ENCODE measurements at regions of chr1 and their contacts with region 1.

Region 1: GRCh38 chr1:46442317-46443161 is 47.1 kb upstream of the DMBX1 start:
- DNase-seq: peak; percentile 94
- H3K4me3 Mint-ChIP-seq: peak overlapping the region; percentile 77
- H3K27ac Mint-ChIP-seq: no peak overlapping the region
- H3K4me1 Mint-ChIP-seq: peaks cover 13% of the 10 kb centered on the region
- H3K27me3 Mint-ChIP-seq: peaks cover 21% of the 10 kb centered on the region
- CTCF ChIP-seq: peak; percentile 85

Region 2: GRCh38 chr1:46425726-46426125 is 16.8 kb before region 1 on chr1:
- CTCF ChIA-PET with region 1: interaction called, 16 read pairs
- POLR2A ChIA-PET with region 1: no interaction called
- intact Hi-C with region 1: no loop called
- DNase-seq: no peak
- H3K4me3 Mint-ChIP-seq: no peak overlapping the region
- H3K27ac Mint-ChIP-seq: no peak overlapping the region
- H3K4me1 Mint-ChIP-seq: peaks cover 5% of the 10 kb centered on the region
- H3K27me3 Mint-ChIP-seq: peaks cover 9% of the 10 kb centered on the region
- CTCF ChIP-seq: no peak

Region 3: DNA sequence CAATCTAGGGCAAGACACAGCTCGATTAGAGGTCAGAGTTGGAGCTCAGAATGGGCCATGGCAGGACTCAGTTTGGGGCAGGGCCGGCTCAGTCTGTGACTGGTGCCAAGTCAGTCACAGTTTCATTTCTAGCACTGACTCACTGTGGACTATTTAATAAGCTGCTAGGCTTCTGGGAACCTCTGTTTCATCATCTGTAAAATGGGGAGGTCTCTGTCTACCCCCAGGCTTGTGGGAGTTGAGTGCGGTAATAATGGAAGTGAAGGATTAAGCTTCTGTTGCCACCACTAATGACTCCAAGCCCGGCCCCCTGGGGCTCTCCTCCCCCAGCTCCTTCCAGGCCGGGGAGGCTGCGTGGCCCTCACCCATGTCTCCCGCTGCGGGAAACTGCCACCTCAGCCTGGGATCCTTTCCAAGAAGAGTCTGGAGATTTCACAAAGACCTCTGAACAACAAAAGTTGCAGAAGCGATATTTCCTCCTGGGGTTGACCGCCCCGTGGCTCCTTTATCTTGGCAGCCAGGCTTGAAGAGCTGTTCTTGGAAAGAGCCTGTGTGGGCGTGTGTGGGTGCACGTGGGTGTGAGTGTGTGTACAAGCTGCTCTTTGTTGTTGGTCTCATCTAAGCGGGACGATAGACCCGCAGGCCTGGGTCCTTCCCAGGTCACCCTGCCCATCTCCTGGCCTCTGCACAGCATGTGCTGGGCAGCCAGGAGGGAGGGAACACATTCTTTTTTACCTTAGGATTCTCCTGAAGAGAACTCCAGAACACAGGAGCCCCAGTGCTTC is 79.8 kb after region 1 on chr1:
- CTCF ChIA-PET with region 1: interaction called, 92 read pairs
- POLR2A ChIA-PET with region 1: interaction called, 4 read pairs
- intact Hi-C with region 1: no loop called
- DNase-seq: peak; percentile 96
- H3K4me3 Mint-ChIP-seq: peak overlapping the region; percentile 46
- H3K27ac Mint-ChIP-seq: peak overlapping the region; percentile 88
- H3K4me1 Mint-ChIP-seq: peaks cover 42% of the 10 kb centered on the region
- H3K27me3 Mint-ChIP-seq: no peaks in the 10 kb centered on the region
- CTCF ChIP-seq: no peak

Region 4: GRCh38 chr1:46539972-46540371 is 97.4 kb after region 1 on chr1:
- CTCF ChIA-PET with region 1: interaction called, 62 read pairs
- POLR2A ChIA-PET with region 1: no interaction called
- intact Hi-C with region 1: no loop called
- DNase-seq: peak; percentile 77
- H3K4me3 Mint-ChIP-seq: no peak overlapping the region
- H3K27ac Mint-ChIP-seq: no peak overlapping the region
- H3K4me1 Mint-ChIP-seq: peaks cover 18% of the 10 kb centered on the region
- H3K27me3 Mint-ChIP-seq: peaks cover 50% of the 10 kb centered on the region
- CTCF ChIP-seq: no peak

Region 5: DNA sequence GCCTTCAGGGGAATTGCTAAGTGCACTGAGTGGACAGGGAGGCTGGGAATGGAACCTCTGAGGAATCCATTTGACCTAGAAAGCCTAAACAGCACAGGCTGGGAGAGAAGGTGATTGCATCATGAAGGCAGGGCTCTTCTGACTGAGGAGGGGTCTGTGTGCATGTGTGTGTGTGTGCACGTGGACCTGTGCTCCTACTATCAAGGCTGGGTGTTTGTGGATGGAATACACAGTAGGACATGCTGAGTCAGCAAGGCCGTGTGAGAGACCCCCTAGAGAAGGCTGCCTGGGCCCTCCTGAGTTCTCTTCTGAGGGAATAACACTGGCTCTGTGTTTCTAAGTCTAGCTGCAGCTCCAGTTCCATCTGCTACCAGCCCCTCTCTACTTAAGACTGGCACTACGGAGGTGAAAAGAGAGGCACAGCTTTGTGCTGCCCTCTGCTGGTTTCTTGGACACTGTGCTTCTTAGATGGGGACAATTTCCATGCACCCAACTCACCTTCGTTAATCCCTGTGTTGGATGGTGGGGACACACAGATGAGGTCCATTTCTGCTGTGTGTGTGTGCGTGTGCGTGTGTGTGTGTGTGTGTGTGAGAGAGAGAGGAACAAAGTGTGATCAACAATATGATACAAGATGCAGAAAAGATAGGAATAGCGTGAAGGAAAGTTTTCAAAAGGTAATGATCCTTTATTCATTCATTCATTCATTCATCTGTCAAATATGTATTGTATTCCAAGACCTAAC is 282.6 kb after region 1 on chr1:
- CTCF ChIA-PET with region 1: interaction called, 3 read pairs
- POLR2A ChIA-PET with region 1: no interaction called
- intact Hi-C with region 1: loop called (anchors 1 kb)
- DNase-seq: peak; percentile 86
- H3K4me3 Mint-ChIP-seq: no peak overlapping the region
- H3K27ac Mint-ChIP-seq: no peak overlapping the region
- H3K4me1 Mint-ChIP-seq: peaks cover 15% of the 10 kb centered on the region
- H3K27me3 Mint-ChIP-seq: peaks cover 34% of the 10 kb centered on the region
- CTCF ChIP-seq: peak; percentile 72